ENCODE measurements at regions of chr3 and their contacts with region 1.

Region 1: GRCh38 chr3:37210230-37210629 is 35.8 kb upstream of the LRRFIP2 start:
- DNase-seq: no peak
- ATAC-seq: no peak
- H3K4me3 Mint-ChIP-seq: no peak overlapping the region
- H3K27ac Mint-ChIP-seq: no peak overlapping the region
- H3K4me1 Mint-ChIP-seq: no peaks in the 10 kb centered on the region
- H3K27me3 Mint-ChIP-seq: no peaks in the 10 kb centered on the region
- CTCF ChIP-seq: no peak

Region 2: DNA sequence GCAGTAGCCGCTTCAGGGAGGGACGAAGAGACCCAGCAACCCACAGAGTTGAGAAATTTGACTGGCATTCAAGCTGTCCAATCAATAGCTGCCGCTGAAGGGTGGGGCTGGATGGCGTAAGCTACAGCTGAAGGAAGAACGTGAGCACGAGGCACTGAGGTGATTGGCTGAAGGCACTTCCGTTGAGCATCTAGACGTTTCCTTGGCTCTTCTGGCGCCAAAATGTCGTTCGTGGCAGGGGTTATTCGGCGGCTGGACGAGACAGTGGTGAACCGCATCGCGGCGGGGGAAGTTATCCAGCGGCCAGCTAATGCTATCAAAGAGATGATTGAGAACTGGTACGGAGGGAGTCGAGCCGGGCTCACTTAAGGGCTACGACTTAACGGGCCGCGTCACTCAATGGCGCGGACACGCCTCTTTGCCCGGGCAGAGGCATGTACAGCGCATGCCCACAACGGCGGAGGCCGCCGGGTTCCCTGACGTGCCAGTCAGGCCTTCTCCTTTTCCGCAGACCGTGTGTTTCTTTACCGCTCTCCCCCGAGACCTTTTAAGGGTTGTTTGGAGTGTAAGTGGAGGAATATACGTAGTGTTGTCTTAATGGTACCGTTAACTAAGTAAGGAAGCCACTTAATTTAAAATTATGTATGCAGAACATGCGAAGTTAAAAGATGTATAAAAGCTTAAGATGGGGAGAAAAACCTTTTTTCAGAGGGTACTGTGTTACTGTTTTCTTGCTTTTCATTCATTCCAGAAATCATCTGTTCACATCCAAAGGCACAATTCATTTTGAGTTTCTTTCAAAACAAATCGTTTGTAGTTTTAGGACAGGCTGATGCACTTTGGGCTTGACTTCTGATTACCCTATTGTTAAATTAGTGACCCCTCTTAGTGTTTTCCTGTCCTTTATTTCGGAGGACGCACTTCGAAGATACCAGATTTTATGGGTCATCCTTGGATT is 216.6 kb before region 1 on chr3 and contains the start of gene MLH1:
- CTCF ChIA-PET with region 1: interaction called, 3 read pairs
- POLR2A ChIA-PET with region 1: no interaction called
- intact Hi-C with region 1: loop called (anchors 10 kb)
- DNase-seq: peak; percentile 100
- ATAC-seq: peak; percentile 90
- H3K4me3 Mint-ChIP-seq: no peak within 1 kb of the TSS
- H3K27ac Mint-ChIP-seq: no peak within 1 kb of the TSS
- H3K4me1 Mint-ChIP-seq: peaks cover 43% of the 10 kb centered on the region
- H3K27me3 Mint-ChIP-seq: no peaks in the 10 kb centered on the region
- CTCF ChIP-seq: no peak
- total RNA-seq, gene MLH1: 89.6 to 93.7 TPM

Region 3: GRCh38 chr3:37024092-37024491 is 186.1 kb before region 1 on chr3:
- CTCF ChIA-PET with region 1: interaction called, 17 read pairs
- POLR2A ChIA-PET with region 1: no interaction called
- intact Hi-C with region 1: no loop called
- DNase-seq: no peak
- ATAC-seq: no peak
- H3K4me3 Mint-ChIP-seq: no peak overlapping the region
- H3K27ac Mint-ChIP-seq: no peak overlapping the region
- H3K4me1 Mint-ChIP-seq: peaks cover 7% of the 10 kb centered on the region
- H3K27me3 Mint-ChIP-seq: no peaks in the 10 kb centered on the region
- CTCF ChIP-seq: peak; percentile 35

Region 4: DNA sequence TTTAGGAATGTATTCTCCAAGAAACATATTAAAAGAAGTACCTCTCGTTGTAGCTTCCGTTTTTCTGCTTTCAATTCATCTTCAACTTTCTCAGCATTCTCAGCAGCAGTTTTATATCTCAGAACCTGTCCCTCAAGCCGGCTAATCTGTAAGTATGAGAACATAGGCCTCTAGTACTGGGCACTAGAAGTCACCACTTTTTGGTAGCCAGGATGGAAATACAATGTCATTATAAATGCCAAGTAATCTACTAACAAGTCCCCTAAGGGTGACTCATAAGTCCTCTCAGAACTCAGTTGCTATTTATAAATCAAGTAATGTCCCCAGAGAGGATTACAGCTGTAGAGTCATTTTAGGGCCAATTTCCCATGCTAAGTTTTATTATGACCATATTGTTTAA is 155.9 kb before region 1 on chr3:
- CTCF ChIA-PET with region 1: no interaction called
- POLR2A ChIA-PET with region 1: no interaction called
- intact Hi-C with region 1: loop called (anchors 5 kb)
- DNase-seq: no peak
- ATAC-seq: peak; percentile 95
- H3K4me3 Mint-ChIP-seq: no peak overlapping the region
- H3K27ac Mint-ChIP-seq: peak overlapping the region; percentile 92
- H3K4me1 Mint-ChIP-seq: peaks cover 21% of the 10 kb centered on the region
- H3K27me3 Mint-ChIP-seq: no peaks in the 10 kb centered on the region
- CTCF ChIP-seq: no peak

Measured in activated CD8-positive, alpha-beta T cell treated with anti-CD3 and anti-CD28 coated beads for 36 hours (primary cell).